Activated CD4-positive, alpha-beta T cell treated with anti-CD3 and anti-CD28 coated beads, Interleukin-2, amount 10 ng/mL, durations not matched to agents 24 days and 14 days (primary cell): ENCODE measurements at regions of chr1 and their contacts with region 1.

Region 1: DNA sequence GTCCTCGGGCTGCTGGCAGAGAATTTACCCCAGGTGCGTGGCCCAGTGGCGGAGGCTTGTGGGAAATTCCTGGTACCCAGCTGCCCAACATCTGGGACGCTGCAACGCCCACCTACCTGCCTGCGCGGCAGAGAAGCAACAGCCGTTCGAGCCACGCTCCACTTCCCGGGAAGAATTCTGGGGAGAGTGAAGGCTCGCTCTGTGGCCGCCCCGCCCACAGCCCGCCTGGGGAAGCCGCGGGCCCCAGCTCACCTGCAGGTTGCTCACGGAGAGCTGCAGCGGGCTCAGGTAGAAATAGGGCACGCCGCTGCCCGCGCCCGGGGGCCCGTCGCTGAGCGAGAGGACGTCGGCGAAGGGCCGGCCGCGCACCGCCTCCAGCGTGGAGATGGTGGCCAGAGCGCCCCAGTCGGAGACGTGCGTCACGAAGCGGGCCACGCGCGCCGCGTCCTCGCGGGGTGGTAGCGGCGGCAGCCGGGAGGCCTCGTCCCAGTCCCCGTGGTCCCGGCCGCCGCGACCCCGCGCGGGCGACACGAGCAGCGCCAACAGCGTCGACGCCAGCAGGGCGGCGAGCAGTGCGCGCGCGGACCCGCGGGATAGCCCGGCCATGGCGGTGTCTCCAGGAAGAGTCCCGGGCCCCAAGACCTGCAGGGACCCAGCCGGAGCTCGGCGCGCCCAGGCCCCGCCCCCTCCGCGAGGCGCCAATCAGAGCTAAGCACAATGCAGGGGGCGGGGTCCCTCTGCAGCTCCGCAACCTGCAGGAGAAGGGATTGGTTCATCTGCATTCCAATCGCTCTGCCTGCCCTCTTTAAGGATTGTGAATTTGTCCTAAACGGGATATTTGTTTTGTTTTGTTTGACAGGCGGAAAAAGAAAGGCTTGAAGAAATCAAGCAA is at the start of gene CREG1:
- DNase-seq: peak; percentile 98
- H3K4me3 Mint-ChIP-seq: peak within 1 kb of the TSS; percentile 88
- H3K27ac Mint-ChIP-seq: no peak within 1 kb of the TSS
- H3K4me1 Mint-ChIP-seq: peaks cover 26% of the 10 kb centered on the region
- H3K27me3 Mint-ChIP-seq: peaks cover 6% of the 10 kb centered on the region
- total RNA-seq, gene CREG1: 12.3 and 13.6 TPM in 2 replicates

Region 2: GRCh38 chr1:167442124-167442848 is 111.1 kb before region 1 on chr1:
- intact Hi-C with region 1: no loop called
- DNase-seq: peak; percentile 95
- H3K4me3 Mint-ChIP-seq: peak overlapping the region; percentile 21
- H3K27ac Mint-ChIP-seq: peak overlapping the region; percentile 50
- H3K4me1 Mint-ChIP-seq: peaks cover 73% of the 10 kb centered on the region
- H3K27me3 Mint-ChIP-seq: no peaks in the 10 kb centered on the region

Region 3: DNA sequence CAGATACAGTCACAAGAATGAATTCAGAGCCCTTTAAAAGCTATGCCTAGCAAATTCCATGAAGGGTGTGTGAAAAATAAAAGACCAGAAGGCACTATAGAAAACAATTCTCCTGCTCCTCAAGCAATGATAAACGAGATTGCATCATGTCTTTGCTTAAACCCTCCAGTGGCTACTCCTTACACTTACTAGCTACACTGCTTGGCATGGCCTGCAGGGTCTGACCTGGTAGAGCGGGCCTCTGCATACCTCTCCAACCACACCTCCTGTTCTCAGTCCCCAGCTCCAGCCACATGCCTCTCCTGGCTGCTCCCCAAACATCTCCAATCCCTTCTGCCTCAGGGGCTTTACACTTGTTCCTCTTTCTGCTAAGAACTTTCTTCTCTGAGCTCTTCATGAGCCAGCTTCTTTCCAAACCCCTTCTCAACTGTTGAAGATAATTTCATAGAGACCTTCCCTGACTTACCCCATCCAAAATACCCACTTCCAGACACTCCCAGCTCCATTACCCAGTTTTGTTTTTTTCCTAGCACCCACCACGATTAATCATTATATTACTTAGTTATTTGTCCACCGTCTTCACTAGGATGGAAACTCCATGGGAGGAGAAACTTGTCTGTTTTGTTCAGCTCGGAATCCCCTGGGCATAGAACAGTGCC is 11.4 kb after region 1 on chr1:
- intact Hi-C with region 1: no loop called
- DNase-seq: no peak
- H3K4me3 Mint-ChIP-seq: no peak overlapping the region
- H3K27ac Mint-ChIP-seq: no peak overlapping the region
- H3K4me1 Mint-ChIP-seq: peaks cover 10% of the 10 kb centered on the region
- H3K27me3 Mint-ChIP-seq: peaks cover 8% of the 10 kb centered on the region

Region 4: DNA sequence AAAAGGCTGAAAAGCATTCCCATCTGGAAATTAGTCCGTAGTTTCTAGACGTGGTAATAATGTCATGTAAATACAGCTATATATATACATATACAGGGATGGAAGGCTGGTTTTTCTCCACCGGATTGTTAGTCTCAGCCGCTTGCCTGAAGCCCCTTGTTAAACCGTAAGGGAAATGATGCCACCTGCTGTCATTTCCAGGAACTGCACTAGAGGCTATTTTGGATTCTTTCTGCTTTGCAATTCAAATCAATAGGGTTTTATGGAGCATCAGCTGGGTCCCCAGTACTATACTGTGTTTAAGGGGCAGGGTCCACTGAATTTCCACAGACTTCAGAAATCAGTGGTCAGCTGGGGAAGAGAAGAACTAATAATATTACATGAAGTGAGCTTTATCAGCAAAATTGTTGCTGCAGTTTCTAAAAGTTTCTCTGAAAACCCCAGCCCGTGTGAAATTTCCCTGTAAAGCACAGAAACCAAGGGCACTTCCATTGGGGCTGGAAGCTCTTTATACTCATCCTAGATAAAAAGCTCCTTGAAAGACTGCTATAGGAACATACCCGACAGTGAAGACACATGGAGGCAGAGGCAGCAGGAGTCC is 134.6 kb after region 1 on chr1:
- intact Hi-C with region 1: loop called (anchors 1 kb)
- DNase-seq: peak; percentile 94
- H3K4me3 Mint-ChIP-seq: no peak overlapping the region
- H3K27ac Mint-ChIP-seq: peak overlapping the region; percentile 56
- H3K4me1 Mint-ChIP-seq: peaks cover 19% of the 10 kb centered on the region
- H3K27me3 Mint-ChIP-seq: no peaks in the 10 kb centered on the region